ENCODE measurements at regions of chr15 and their contacts with region 1.

Region 1: DNA sequence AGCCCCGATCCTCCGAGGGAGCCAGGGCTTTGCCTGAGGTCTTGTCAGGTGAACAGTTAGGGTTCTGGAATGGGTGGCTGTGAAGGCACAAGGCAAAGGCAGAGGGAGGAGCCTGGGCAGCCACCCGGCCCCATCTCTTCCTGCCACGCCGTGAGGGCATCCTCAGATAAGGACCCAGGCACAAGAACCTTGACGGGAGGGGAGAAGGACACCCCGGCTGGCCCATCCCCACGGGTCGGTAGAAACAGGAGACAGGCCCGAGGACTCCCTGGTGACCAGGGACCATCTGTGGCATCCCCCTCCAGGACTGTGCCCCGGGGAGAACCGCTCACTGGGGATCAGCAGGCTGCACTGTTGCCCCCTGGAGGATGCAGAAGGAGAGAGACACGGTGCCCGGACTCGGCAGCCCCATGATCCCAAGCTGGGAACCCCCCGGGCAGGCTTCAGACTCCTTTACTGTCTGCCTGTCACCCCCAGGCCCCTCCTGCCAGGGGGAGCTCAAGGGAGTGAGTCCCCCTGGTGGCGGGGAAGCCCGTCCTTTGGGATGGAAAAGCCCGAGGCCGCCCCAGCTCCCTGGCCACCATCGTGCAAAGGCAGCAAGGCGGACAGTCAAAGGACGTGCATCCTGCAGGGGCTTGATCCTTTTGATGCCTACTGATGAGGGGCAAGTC is 12.3 kb upstream of the PCSK6 start:
- DNase-seq: peak in 2 of 10 donors; percentile 53
- H3K4me3 ChIP-seq: peak overlapping the region in 21 of 59 donors; percentile 0 to 50 (median 22)
- H3K27ac ChIP-seq: peak overlapping the region in 35 of 59 donors; percentile 9 to 83 (median 59)
- H3K27me3 ChIP-seq: no peaks in the 10 kb centered on the region
- CTCF ChIP-seq: peak in 55 of 56 donors; percentile 15 to 78 (median 59)

Region 2: GRCh38 chr15:101303408-101303807 is 198.4 kb before region 1 on chr15:
- intact Hi-C with region 1: loop called in 1 of 2 experiments (anchors 5 kb)
- DNase-seq: no peak
- H3K4me3 ChIP-seq: no peak overlapping the region
- H3K27ac ChIP-seq: peak overlapping the region in 1 of 59 donors; percentile 18
- H3K27me3 ChIP-seq: no peaks in the 10 kb centered on the region
- CTCF ChIP-seq: no peak

Region 3: DNA sequence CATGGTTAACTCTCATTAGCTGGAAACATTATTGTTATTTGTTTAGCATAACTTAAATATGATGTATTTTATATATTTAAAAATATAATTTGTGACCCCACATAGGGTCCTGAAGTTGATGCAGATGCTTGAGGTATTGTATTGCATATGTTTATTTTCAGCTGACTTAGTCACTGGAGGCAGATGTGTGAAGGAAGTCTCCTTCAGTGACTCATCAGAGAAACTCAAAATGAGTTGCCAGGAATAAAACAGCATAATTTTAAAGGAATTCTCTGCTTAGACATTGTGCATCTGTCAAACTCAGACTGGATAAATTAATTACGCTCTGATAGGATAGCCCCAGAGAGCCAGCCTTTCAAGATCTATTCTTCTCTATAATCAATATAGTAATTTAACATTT is 293.6 kb after region 1 on chr15:
- intact Hi-C with region 1: no loop called
- DNase-seq: no peak
- H3K4me3 ChIP-seq: no peak overlapping the region
- H3K27ac ChIP-seq: no peak overlapping the region
- H3K27me3 ChIP-seq: peaks cover 0 to 15% (median 0%) of the 10 kb centered on the region in 45 donors
- CTCF ChIP-seq: no peak